ENCODE measurements at regions of chr9 and their contacts with region 1.

Region 1: GRCh38 chr9:126490871-126491567 is 122.7 kb upstream of the LMX1B start:
- DNase-seq: peak; percentile 72
- H3K4me3 Mint-ChIP-seq: no peak overlapping the region
- H3K27ac Mint-ChIP-seq: no peak overlapping the region
- H3K4me1 Mint-ChIP-seq: peaks cover 10% of the 10 kb centered on the region
- H3K27me3 Mint-ChIP-seq: peaks cover 2% of the 10 kb centered on the region

Region 2: DNA sequence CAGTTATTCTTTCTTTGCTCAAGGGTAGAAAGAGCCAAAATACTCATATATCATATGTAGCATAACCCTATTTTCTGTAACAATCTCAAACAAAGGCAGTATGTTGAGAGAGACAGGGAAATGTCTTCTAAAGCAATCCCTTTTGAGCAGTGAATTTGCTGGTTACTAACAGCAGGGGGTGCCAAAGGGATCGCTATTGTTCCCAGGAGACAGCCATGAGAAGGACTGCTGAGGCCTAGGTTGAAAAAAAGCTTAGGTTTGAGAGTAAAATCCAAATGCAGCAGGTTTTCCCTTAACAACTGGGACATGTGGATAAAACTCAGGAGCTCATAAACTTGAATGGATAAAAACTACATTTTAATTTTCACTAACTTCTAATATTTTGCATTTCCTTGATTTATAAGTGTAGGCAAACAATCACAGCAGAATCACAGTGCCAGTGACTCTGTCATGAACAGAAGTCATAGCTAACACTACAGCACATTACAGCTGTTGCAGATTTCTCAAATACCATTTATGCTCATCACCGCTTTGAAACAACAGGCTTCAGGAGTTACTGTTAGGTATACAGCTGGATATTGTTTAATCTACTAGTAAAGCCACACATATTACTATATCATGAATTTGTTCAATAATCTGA is 932.4 kb before region 1 on chr9:
- CTCF ChIA-PET with region 1: no interaction called
- intact Hi-C with region 1: loop called (anchors 2 kb)
- DNase-seq: peak; percentile 81
- H3K4me3 Mint-ChIP-seq: no peak overlapping the region
- H3K27ac Mint-ChIP-seq: no peak overlapping the region
- H3K4me1 Mint-ChIP-seq: peaks cover 11% of the 10 kb centered on the region
- H3K27me3 Mint-ChIP-seq: no peaks in the 10 kb centered on the region

Region 3: GRCh38 chr9:126301985-126302603 is 188.9 kb before region 1 on chr9:
- CTCF ChIA-PET with region 1: interaction called, 6 read pairs
- intact Hi-C with region 1: loop called (anchors 1 kb)
- DNase-seq: peak; percentile 68
- H3K4me3 Mint-ChIP-seq: no peak overlapping the region
- H3K27ac Mint-ChIP-seq: no peak overlapping the region
- H3K4me1 Mint-ChIP-seq: no peaks in the 10 kb centered on the region
- H3K27me3 Mint-ChIP-seq: no peaks in the 10 kb centered on the region

Region 4: DNA sequence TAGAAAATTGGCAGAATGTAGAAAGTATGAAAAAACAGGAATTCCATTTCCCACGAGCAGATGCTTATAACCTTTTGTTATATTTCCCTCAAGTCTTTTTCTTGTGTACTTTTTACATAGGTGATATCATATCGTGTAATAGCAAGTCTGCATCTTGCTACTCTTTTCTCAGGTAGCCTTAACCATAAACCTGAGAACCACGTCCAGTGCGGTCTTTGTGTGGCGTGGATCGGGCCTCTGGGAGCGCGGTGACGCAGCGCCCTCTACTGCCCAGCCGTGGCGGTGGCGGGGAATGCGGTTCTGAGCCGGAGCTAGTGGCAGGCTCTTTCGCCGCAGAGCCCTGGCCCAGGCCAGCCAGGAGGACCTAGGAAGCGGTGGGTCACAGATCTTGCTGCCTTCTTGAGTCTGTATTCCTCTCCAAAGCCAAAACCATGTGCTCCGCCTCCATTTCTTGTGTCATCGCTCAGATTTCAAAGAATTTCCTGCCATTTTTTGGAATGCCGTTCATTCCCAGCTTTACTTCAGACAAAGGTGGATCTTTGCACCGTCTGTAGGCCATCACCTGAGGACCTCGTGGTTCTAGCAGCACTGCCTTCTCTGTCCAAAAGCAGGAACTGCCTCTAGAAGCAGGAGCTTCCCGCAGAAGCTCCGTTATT is 92.5 kb before region 1 on chr9:
- CTCF ChIA-PET with region 1: interaction called, 43 read pairs
- intact Hi-C with region 1: loop called (anchors 2 kb)
- DNase-seq: peak; percentile 82
- H3K4me3 Mint-ChIP-seq: no peak overlapping the region
- H3K27ac Mint-ChIP-seq: no peak overlapping the region
- H3K4me1 Mint-ChIP-seq: peaks cover 42% of the 10 kb centered on the region
- H3K27me3 Mint-ChIP-seq: no peaks in the 10 kb centered on the region

Region 5: DNA sequence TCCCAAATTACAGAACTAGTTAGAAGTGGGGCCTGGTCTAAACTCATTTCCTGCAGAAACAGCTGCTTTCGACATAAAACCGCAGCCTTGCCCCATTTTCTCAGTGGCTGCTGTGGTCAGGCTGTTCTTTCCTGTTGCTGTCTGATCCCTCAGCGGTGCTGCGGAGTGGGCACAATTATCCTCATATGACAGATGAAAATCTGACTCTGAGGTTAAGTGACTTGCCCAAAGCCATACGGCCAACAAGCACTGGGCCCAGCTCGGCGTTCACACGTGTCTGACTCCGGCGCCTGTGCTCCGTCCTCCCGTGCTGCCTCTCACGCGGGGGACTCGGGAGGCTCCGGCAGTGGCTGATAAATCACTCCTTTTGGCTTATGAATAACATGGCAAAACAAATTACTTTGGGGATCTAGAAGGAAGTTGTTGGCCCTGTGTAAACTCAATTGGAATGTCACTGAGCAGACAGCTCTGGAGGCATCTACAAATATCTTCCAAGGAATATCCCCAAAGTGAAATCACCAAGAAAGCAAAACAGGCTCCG is 19.9 kb before region 1 on chr9:
- CTCF ChIA-PET with region 1: interaction called, 11 read pairs
- intact Hi-C with region 1: loop called (anchors 2 kb)
- DNase-seq: peak; percentile 92
- H3K4me3 Mint-ChIP-seq: peak overlapping the region; percentile 33
- H3K27ac Mint-ChIP-seq: peak overlapping the region; percentile 20
- H3K4me1 Mint-ChIP-seq: peaks cover 46% of the 10 kb centered on the region
- H3K27me3 Mint-ChIP-seq: no peaks in the 10 kb centered on the region

Region 6: DNA sequence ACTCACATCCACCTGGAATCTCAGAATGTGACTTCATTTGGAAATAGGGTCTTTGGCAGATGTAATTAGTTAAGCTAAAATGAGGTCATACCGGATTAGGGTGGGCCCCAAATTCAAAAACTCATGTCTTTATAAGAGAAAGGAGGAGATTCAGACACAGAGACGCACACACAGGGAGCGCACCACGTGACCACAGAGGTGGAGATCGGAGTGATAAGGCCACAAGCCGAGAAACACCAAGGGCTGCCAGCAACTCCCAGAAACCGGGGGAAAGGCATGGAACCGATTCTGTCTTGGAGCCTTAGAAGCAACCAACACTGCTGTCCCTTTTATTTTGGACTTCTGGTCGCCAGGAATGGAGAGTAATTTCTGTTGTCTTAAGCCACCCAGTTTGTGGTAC is 90.9 kb after region 1 on chr9:
- CTCF ChIA-PET with region 1: no interaction called
- intact Hi-C with region 1: no loop called
- DNase-seq: no peak
- H3K4me3 Mint-ChIP-seq: no peak overlapping the region
- H3K27ac Mint-ChIP-seq: no peak overlapping the region
- H3K4me1 Mint-ChIP-seq: no peaks in the 10 kb centered on the region
- H3K27me3 Mint-ChIP-seq: peaks cover 22% of the 10 kb centered on the region

Region 7: DNA sequence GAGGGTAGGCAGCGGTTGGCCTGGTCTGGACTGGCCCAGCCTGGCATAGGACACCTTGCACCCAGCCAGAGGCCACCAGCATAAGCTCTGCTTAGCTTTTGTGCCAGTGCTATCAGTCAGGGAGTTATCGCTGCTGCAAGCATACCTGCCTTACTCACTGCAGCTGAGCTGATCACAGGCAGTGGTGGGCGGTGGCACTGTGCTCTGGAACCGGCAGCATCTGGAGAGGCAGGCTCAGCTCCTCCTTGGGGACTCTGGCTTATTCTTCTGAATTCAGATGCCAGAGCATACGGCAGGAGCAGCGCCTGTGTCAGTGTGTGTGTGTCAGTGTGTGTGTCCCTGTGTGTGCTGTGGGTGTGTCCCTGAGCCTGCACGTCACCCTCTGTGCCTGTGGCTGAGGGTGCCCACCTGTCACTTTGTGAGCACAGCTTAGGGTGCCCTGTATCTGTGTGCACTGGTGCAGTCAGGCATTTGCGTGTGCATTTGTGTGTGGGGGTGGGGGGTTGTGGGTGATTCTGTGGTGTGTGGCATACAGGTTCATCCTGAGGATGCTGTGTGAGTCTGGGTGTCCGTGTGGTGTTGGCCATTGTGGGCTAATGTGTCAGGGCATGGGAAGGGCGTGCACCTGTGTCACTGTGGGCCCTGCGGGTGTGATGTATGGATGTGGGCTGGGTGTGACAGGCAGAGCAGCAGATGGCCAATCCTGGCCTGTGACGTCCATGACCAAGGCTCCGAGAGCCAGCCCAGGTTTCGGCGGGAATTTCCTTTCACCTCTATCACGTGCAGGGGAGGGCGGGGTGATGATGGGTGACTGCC is 146.2 kb after region 1 on chr9:
- CTCF ChIA-PET with region 1: no interaction called
- intact Hi-C with region 1: no loop called
- DNase-seq: no peak
- H3K4me3 Mint-ChIP-seq: no peak overlapping the region
- H3K27ac Mint-ChIP-seq: no peak overlapping the region
- H3K4me1 Mint-ChIP-seq: no peaks in the 10 kb centered on the region
- H3K27me3 Mint-ChIP-seq: peaks cover 47% of the 10 kb centered on the region

Region 8: DNA sequence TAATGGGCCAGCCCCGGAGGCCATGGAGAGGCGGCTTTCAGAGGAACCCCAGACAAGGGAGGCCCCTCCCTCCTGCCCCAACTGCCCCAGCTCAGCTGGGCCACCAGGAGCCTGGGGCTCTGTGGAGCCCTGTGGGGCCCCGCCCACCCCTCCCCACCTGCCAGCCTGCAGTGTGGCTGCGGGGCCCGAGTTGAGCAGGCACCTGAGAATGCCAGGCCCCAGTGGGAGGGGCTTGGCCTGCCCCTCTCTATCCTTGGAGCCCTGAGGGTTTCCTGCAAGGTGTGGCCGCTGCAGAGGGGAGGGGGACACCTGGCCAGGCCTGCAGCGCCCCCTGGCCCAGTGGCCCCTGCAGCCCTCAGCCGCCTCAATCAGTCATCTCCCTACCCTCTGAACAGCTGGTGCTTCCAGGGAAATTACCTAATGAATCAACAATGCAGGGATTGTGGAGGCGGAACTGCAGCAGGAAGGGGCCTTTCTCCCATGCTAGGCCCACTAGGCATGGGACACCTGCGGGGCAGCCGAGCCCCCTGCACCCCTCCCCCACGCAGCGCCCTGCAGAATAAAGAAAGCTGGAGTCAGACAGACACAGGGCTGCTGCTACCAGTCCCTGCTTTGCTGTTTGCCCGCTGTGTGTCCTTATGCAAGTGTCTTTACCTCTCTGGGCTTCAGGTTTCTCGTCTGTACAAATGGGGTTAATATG is 170.7 kb after region 1 on chr9:
- CTCF ChIA-PET with region 1: no interaction called
- intact Hi-C with region 1: no loop called
- DNase-seq: no peak
- H3K4me3 Mint-ChIP-seq: no peak overlapping the region
- H3K27ac Mint-ChIP-seq: no peak overlapping the region
- H3K4me1 Mint-ChIP-seq: no peaks in the 10 kb centered on the region
- H3K27me3 Mint-ChIP-seq: peaks cover 26% of the 10 kb centered on the region